Activated CD4-positive, alpha-beta memory T cell treated with anti-CD3 and anti-CD28 coated beads for 36 hours (primary cell): ENCODE measurements at regions of chr7 and their contacts with region 1.

Region 1: GRCh38 chr7:87152107-87152844 is at the start of gene DMTF1:
- DNase-seq: peak; percentile 92
- H3K4me3 Mint-ChIP-seq: peak within 1 kb of the TSS; percentile 91
- H3K27ac Mint-ChIP-seq: peak within 1 kb of the TSS; percentile 96
- H3K4me1 Mint-ChIP-seq: peaks cover 42% of the 10 kb centered on the region
- H3K27me3 Mint-ChIP-seq: no peaks in the 10 kb centered on the region
- total RNA-seq, gene DMTF1: 62.7 to 71.1 TPM

Region 2: GRCh38 chr7:86932038-86932512 is 220.2 kb before region 1 on chr7:
- CTCF ChIA-PET with region 1: interaction called, 56 read pairs
- POLR2A ChIA-PET with region 1: no interaction called
- intact Hi-C with region 1: loop called (anchors 2 kb)
- DNase-seq: peak; percentile 27
- H3K4me3 Mint-ChIP-seq: no peak overlapping the region
- H3K27ac Mint-ChIP-seq: no peak overlapping the region
- H3K4me1 Mint-ChIP-seq: peaks cover 9% of the 10 kb centered on the region
- H3K27me3 Mint-ChIP-seq: no peaks in the 10 kb centered on the region

Region 3: DNA sequence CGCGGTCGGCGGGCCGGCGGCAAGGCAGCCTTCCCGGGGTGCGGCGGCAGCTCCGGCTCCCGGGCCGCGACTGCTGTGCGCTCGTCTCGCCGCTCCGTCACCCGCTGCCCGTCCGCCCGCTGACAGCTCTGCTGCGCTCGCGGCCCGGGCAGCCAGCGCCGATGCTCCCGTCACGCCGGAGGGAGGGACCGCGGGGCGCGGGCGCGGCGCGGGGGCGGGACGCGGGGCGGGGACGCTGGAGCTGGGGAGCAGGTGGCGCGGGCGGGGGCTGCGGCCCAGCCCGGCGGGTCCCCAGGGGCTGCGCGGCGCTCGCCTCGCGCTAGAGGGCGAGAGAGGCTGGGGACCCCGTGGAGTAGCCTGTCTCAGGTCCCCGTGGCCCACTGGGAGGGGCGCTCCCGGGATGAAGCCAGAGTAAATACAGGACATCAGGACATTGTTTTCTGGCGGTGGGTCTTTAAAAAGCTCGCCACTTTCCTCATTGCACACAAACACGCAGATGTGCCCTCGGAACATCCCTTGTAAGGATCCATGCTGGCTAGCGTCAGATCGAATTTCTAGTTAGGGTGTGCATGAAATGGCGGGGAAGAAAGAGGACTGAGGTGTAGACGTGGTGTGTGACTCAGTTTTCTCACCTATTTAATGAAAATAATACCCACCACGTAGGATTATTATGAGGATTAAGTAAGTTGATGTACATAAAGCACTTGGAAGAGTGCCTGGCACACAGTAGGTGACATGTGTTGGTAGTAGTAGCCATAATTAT is 92.6 kb before region 1 on chr7 and contains the start of gene ELAPOR2:
- CTCF ChIA-PET with region 1: interaction called, 27 read pairs
- POLR2A ChIA-PET with region 1: interaction called, 4 read pairs
- intact Hi-C with region 1: loop called (anchors 1 kb)
- DNase-seq: peak; percentile 86
- H3K4me3 Mint-ChIP-seq: peak within 1 kb of the TSS; percentile 76
- H3K27ac Mint-ChIP-seq: no peak within 1 kb of the TSS
- H3K4me1 Mint-ChIP-seq: peaks cover 11% of the 10 kb centered on the region
- H3K27me3 Mint-ChIP-seq: peaks cover 7% of the 10 kb centered on the region
- total RNA-seq, gene ELAPOR2: 4.0 to 4.1 TPM

Region 4: GRCh38 chr7:87213811-87214210 is 61.5 kb after region 1 on chr7:
- CTCF ChIA-PET with region 1: interaction called, 53 read pairs
- POLR2A ChIA-PET with region 1: interaction called, 104 read pairs
- intact Hi-C with region 1: loop called (anchors 1 kb)
- DNase-seq: no peak
- H3K4me3 Mint-ChIP-seq: peak overlapping the region; percentile 24
- H3K27ac Mint-ChIP-seq: peak overlapping the region; percentile 79
- H3K4me1 Mint-ChIP-seq: peaks cover 79% of the 10 kb centered on the region
- H3K27me3 Mint-ChIP-seq: no peaks in the 10 kb centered on the region

Region 5: DNA sequence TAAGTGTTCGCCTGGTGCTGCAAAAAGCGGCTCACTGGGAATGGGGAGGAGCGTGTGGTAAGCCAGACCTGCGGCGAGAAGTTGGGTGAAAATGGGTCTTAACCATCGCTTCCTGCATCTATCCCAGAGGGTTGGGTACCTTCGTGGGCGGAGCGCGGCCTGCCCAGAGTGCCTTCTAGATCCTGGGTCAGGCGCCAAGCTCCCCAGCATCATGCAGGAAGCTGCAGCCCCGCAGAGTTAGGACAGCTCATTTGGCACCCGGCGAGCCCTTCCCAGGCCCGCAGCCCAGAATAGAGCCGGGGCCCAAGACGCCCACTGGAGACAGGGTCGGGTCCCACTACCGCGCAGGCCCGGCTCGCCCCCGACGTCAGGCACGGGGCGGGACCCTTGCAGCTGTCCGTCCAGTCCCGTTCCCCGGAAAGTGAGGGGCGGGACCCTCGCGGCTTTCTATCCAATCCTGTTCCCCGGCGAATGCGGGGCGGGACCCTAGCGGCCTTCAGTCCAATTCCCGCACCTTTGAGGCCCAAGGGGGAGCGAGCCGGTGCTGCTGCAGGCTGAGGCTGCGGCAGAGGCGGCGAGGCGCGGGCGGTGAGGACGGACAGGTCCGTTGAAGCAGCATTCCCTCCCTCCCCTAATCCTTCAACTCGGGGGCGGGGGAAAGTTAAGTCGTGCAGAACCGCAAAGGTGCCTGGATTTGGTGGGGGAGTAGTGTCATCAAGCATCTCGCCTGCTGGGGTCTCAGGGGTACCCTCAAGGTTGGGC is 193.1 kb after region 1 on chr7 and contains the start of gene CROT:
- CTCF ChIA-PET with region 1: interaction called, 3 read pairs
- POLR2A ChIA-PET with region 1: interaction called, 6 read pairs
- intact Hi-C with region 1: loop called (anchors 1 kb)
- DNase-seq: peak; percentile 97
- H3K4me3 Mint-ChIP-seq: peak within 1 kb of the TSS; percentile 99
- H3K27ac Mint-ChIP-seq: peak within 1 kb of the TSS; percentile 95
- H3K4me1 Mint-ChIP-seq: peaks cover 28% of the 10 kb centered on the region
- H3K27me3 Mint-ChIP-seq: no peaks in the 10 kb centered on the region
- total RNA-seq, gene CROT: 8.5 to 9.6 TPM